Pancreas (tissue), 10 donors: ENCODE measurements at regions of chr6 and their contacts with region 1.

Region 1: DNA sequence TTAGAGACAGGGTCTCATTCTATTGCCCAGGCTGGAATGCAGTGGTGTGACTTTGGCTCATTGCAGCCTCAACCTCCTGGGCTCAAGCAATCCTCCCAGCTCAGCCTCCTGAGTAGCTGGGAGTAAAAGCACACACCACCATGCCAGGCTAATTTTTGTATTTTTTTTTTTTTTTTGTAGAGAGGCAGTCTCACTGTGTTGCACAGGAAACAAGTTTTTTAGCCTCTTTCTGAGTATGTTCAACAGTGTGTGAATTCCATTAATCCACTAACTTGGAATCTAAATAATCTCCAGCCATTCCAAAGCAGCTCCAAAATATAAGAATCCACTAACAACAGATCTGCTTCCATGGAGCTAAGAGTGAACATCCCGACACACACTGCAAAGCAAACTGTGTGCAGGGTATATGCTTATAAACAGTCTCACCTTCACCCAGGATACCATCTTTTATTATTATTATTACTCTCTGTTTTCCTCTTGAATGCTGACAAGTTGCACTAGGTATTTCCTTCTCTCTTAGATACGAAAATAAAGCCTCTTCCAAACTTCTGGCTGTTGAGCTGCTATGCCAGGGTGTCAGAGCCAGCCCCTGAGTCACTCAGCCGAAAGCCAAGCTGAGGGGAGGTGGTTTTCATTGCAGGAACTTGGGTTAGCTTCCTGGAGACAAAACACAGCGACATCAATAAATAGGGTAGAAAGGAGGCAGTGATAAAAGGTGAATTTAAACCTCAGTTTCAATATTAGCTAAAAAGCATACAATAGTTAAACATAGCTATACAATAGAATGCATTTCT is 264.9 kb downstream of the HIVEP2 start:
- DNase-seq: no peak
- ATAC-seq: no peak
- H3K4me3 ChIP-seq: no peak overlapping the region
- H3K27ac ChIP-seq: no peak overlapping the region
- H3K4me1 ChIP-seq: no peaks in the 10 kb centered on the region
- H3K27me3 ChIP-seq: no peaks in the 10 kb centered on the region
- CTCF ChIP-seq: no peak

Region 2: DNA sequence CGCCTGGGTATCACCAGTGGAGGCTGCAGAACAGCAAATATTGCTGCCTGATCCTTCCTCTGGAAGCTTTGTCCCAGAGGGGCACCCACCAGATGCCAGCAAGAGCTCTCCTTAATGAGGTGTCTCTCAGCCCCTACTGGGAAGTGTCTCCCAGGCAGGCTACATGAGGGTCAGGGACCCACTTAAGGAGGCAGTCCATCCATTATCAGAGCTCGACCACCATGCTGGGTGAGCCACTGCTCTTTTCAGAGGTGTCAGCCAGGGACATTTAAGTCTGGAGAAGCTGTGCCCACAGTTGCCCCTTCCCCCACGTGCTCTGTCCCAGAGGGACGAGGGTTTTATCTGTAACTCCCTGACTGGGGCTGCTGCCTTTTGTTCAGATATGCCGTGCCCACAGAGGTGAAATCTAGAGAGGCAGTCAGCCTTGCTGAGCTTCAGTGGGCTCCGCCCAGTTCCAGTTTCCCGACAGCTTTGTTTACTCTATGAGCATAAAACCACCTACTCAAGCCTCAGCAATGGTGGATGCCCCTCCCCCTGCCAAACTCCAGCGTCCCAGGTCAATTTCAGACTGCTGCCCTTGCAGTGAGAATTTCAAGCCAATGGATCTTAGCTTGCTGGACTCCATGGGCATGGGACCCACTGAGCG is 354.7 kb after region 1 on chr6:
- intact Hi-C with region 1: loop called in 1 of 3 experiments (anchors 10 kb)
- DNase-seq: peak in 1 of 6 donors; percentile 21
- ATAC-seq: no peak
- H3K4me3 ChIP-seq: no peak overlapping the region
- H3K27ac ChIP-seq: no peak overlapping the region
- H3K4me1 ChIP-seq: no peaks in the 10 kb centered on the region
- H3K27me3 ChIP-seq: no peaks in the 10 kb centered on the region
- CTCF ChIP-seq: no peak